ENCODE measurements at regions of chr1 and their contacts with region 1.

Region 1: GRCh38 chr1:230310381-230311163 is 115.6 kb downstream of the PGBD5 start:
- DNase-seq: no peak
- H3K4me3 ChIP-seq: no peak overlapping the region
- H3K27ac ChIP-seq: no peak overlapping the region
- H3K4me1 ChIP-seq: peaks cover 3 to 20% (median 10%) of the 10 kb centered on the region in 3 donors
- H3K27me3 ChIP-seq: peaks cover 0 to 11% (median 0%) of the 10 kb centered on the region in 4 donors
- CTCF ChIP-seq: peak; percentile 82 to 96 (median 90)
- POLR2A ChIP-seq: no peak

Region 2: DNA sequence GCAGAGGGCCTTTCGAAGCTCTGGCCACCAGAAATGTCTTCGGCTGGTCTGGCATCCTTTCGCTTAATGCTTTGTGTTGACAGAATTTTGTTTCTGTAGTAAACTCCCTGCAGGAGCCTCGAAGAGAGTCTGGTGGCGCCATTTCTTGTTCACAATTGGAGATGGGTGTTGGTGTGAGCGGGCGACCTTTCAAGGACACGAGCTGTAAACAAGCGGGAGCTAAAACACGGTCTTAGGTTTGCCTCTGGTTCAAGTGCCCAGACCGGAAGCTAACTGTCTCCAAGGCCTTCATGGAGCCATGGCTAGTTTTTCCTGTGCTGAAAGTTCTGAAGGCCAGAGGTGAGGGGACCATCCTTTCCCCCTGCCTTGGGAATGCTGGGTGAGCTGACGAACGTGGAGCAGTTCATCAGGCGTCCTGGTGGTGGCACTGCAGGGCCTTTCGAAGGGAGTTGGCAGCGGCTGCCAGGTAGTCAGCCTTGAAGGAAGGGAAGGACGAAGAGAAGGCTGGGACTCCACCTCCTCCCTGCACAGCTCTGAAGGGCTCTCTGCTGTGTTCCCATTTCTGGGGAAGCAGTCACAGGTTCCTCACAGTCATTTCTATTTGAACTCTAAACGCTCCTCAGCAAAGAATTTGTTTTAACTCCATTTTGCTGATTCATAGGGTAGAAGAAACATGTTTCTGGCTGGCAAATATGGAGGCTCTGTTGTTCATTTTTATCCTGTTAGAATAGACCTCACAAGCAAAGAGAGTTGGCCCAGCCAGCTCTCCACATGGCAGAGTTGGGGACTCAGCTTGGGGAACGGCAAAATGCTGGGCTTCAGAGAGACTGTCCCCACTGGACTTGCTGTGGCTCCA is 649.3 kb before region 1 on chr1:
- intact Hi-C with region 1: loop called (anchors 10 kb)
- DNase-seq: no peak
- H3K4me3 ChIP-seq: no peak overlapping the region
- H3K27ac ChIP-seq: no peak overlapping the region
- H3K4me1 ChIP-seq: peaks cover 0 to 21% (median 10%) of the 10 kb centered on the region in 3 donors
- H3K27me3 ChIP-seq: no peaks in the 10 kb centered on the region
- CTCF ChIP-seq: peak; percentile 80 to 93 (median 86)
- POLR2A ChIP-seq: no peak